Transverse colon (tissue), 4 donors: ENCODE measurements at regions of chr20 and their contacts with region 1.

Region 1: GRCh38 chr20:33624399-33624798 is 37.7 kb upstream of the C20orf144 start:
- DNase-seq: no peak
- H3K4me3 ChIP-seq: no peak overlapping the region
- H3K27ac ChIP-seq: no peak overlapping the region
- H3K4me1 ChIP-seq: peaks cover 0 to 7% (median 0%) of the 10 kb centered on the region in 4 donors
- H3K27me3 ChIP-seq: no peaks in the 10 kb centered on the region
- CTCF ChIP-seq: no peak
- EP300 ChIP-seq: no peak
- POLR2A ChIP-seq: no peak

Region 2: DNA sequence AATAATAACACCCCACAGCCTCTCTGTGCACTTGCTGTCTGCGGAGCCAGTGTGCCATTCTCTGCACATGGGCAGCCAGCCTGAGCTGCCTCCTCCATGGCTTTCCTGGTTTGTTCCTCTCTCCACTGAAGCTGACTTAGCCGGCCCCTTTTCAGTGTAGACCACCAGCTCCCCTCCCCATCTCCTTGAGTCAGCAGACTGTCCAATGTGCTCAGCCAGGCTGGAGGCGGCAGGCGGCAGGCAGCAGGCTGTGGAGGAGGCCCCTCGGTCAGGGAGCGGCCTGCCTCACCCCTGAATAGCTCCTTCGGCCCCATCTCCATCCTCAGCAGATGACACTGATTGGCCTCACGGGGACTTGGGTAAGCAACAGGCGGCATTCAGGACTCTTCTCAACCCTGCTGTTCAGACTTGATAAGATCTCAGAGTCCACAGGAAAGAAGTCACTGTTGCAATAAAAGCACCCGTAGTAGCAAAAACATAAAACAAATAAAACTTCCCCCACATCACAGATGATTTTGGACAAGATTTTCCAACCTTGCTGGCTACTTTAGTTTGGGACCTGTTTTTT is 20.5 kb after region 1 on chr20:
- in situ Hi-C with region 1: no loop called
- intact Hi-C with region 1: loop called (anchors 1 kb)
- DNase-seq: no peak
- H3K4me3 ChIP-seq: no peak overlapping the region
- H3K27ac ChIP-seq: no peak overlapping the region
- H3K4me1 ChIP-seq: peaks cover 0 to 26% (median 7%) of the 10 kb centered on the region in 4 donors
- H3K27me3 ChIP-seq: no peaks in the 10 kb centered on the region
- CTCF ChIP-seq: no peak
- EP300 ChIP-seq: no peak
- POLR2A ChIP-seq: no peak

Region 3: DNA sequence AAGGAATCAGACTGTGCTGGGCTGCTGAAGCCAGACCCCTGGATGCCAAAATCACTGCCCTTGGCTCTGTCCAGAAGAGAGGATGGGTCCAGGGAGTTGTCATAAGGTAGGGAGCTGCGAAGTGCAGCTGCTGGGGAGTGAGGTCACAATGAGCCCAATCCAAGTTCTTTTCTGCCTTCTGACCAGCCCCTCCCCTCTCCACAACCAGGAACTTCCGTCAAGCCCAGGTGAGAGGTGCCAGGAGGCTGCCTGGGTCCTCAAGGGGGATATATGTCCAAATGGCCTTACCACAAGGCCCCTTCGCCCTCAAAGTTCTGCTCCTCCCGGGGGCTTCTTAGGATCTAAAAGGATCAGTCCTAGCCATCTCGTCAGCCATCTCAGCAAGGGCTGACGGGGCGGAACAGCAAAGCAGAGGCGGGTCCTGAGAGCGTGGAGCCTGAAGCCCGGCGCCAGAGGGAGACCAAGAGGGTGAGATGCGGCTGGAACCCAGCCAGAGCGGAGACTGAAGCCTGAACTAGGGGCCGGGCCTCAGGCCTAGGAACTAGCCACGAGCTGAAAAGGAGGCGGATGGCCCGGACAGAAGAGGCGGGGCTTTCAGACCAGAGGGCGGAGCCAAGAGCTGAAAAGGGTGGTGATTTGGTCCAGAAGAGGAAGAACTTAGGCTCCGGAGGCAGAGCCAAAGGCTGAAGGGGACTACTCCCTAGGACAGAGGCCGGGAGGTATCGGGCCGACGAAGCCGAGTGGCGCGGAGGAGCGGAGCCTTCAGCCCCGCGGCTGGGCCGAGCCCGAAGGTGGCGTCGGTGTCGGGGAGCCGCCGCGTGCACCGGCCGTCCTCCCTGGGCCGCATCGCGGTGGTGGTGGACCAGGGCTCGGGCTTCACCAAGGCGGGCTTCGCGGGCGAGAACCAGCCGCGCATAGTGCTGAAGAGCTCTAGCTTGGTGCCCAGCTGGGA is 42.2 kb after region 1 on chr20 and contains the start of gene ACTL10:
- in situ Hi-C with region 1: no loop called
- intact Hi-C with region 1: no loop called
- DNase-seq: peak; percentile 99
- H3K4me3 ChIP-seq: peak within 1 kb of the TSS; percentile 10 to 68 (median 53)
- H3K27ac ChIP-seq: peak within 1 kb of the TSS; percentile 91 to 99 (median 96)
- H3K4me1 ChIP-seq: peaks cover 15 to 42% (median 34%) of the 10 kb centered on the region in 4 donors
- H3K27me3 ChIP-seq: no peaks in the 10 kb centered on the region
- CTCF ChIP-seq: peak; percentile 16 to 45 (median 30)
- EP300 ChIP-seq: no peak
- POLR2A ChIP-seq: peak; percentile 79
- total RNA-seq, gene ACTL10: 1.5 to 14.1 (median 3.0) TPM in 3 of 4 donors, not detected in the other

Region 4: GRCh38 chr20:34473262-34473883 is 849.0 kb after region 1 on chr20:
- in situ Hi-C with region 1: no loop called
- intact Hi-C with region 1: loop called (anchors 10 kb)
- DNase-seq: peak; percentile 45
- H3K4me3 ChIP-seq: no peak overlapping the region
- H3K27ac ChIP-seq: no peak overlapping the region
- H3K4me1 ChIP-seq: peaks cover 0 to 10% (median 3%) of the 10 kb centered on the region in 4 donors
- H3K27me3 ChIP-seq: no peaks in the 10 kb centered on the region
- CTCF ChIP-seq: peak in 3 of 5 experiments; percentile 12 to 21 (median 17)
- EP300 ChIP-seq: no peak
- POLR2A ChIP-seq: no peak